ENCODE measurements at regions of chr20 and their contacts with region 1.

Region 1: DNA sequence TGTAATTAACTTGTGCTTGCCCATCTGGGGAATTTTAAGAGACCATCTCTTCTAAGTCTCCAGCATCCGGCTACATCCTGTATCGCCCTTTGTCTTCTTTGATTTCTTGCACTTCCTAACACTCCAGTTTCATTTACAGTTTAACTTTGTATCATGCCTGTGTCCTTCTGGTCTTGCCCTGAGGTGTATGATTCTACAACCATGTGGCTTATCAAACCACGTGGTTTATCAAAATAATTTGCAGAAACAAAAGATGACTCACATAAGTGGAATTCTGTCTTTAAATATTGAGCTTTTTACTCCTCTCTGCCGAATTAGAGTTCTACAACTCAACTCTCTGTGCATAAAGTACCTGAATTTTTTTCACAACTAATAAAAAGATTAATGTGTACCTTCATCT is 580.7 kb downstream of the KIF16B start:
- DNase-seq: no peak
- ATAC-seq: no peak
- H3K4me3 ChIP-seq: no peak overlapping the region
- H3K27ac ChIP-seq: no peak overlapping the region
- H3K4me1 ChIP-seq: no peaks in the 10 kb centered on the region
- H3K27me3 ChIP-seq: no peaks in the 10 kb centered on the region
- CTCF ChIP-seq: no peak

Region 2: DNA sequence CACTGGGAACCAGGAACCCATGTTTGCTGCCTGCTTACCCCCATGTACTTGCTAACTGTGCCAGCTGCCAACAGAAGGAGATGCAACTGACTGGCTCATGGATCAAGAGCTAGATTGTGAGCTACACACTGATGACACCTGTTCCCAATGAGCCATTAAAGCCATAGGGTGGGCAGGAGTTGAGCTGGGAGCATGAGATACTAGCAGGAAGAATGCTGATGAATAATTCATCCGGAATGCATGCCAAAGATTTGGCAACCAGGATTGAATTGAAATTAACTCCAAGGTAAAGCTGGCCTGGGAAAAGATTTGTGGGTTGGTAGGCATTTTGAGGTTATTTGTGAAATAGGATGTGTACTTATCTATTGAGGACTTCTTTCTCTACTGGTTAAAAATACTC is 50.4 kb before region 1 on chr20:
- intact Hi-C with region 1: loop called in 1 of 10 experiments (anchors 5 kb)
- DNase-seq: no peak
- ATAC-seq: no peak
- H3K4me3 ChIP-seq: no peak overlapping the region
- H3K27ac ChIP-seq: no peak overlapping the region
- H3K4me1 ChIP-seq: no peaks in the 10 kb centered on the region
- H3K27me3 ChIP-seq: peaks cover 0 to 6% (median 0%) of the 10 kb centered on the region in 7 donors
- CTCF ChIP-seq: no peak

Measured in heart right ventricle (tissue), 16 donors.